Caco-2 (cell line): ENCODE measurements at regions of chr3 and their contacts with region 1.

Region 1: DNA sequence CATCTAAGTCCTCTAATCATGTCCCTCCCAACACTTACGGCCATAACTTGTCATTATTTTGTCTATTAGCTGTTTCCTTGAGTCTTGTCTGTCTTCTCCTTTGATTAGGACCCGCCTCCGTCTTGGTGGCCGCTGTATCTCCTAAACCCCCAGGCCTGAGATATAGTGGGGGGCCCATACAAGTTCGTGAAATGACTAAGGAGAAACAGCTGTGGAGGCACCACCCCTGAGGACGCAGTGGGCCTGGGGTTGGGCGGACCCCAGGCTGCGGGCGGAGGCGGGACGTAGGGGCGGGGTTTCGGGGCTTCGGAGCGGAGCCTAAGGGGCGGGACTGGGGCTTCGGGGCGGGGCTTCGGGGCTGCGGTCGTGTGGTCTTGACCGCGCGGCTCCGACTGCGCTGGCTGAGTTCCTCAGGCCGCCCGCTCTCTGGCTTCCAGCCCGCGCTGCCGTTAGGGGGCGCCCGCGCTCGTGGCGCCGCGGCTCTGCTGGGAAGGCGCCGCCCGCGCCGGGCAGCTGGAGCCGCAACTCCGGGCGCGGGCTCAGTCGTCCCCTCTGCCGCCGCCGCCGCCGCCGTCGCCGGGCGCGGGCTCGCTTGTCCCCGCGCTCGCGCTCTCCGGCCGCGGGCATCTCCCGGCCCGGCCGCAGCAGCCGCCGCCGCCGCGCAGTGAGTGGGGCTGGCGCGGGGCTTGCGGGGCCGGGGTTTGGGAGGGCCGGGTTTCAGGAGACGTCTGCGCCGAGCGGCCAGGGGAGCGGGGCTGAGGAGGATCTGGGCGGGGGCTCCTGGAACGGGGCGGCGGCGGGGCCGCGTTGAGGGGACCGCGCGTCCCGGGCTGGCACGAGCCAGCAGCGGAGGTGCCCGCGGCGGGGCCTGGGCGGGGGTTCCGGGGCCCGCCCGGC is at the start of gene KCTD6:
- DNase-seq: peak; percentile 90 to 96
- H3K4me3 ChIP-seq: peak within 1 kb of the TSS; percentile 51
- H3K4me3 Mint-ChIP-seq: peak within 1 kb of the TSS; percentile 94
- H3K27ac Mint-ChIP-seq: peak within 1 kb of the TSS; percentile 87
- H3K4me1 ChIP-seq: peaks cover 26% of the 10 kb centered on the region
- H3K4me1 Mint-ChIP-seq: peaks cover 23% of the 10 kb centered on the region
- H3K27me3 ChIP-seq: no peaks in the 10 kb centered on the region
- H3K27me3 Mint-ChIP-seq: no peaks in the 10 kb centered on the region
- CTCF ChIP-seq: peak; percentile 70 to 73
- total RNA-seq, gene KCTD6: 9.2 and 9.8 TPM in 2 replicates

Region 2: DNA sequence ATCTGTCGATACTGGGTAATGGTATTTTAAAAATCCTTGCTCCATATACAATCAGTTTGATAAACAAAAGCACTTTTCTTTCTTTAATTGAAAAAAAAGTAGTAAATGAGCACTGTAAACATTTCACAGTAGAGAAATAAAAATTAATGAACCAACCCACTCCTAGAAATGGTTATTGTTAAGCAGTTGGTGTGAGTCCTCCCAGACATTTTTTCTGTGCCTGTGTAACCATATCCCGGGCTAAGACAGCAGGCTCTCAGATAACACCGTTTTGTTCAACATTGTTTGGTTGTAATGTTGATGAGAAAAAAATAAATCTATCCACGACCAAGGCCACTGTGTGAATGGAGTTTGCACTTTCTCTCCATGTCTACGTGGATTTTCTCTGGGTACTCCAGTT is 116.5 kb before region 1 on chr3:
- CTCF ChIA-PET with region 1: no interaction called
- POLR2A ChIA-PET with region 1: no interaction called
- intact Hi-C with region 1: no loop called
- DNase-seq: no peak
- H3K4me3 ChIP-seq: no peak overlapping the region
- H3K4me3 Mint-ChIP-seq: no peak overlapping the region
- H3K27ac Mint-ChIP-seq: no peak overlapping the region
- H3K4me1 ChIP-seq: peaks cover 13% of the 10 kb centered on the region
- H3K4me1 Mint-ChIP-seq: peaks cover 19% of the 10 kb centered on the region
- H3K27me3 ChIP-seq: no peaks in the 10 kb centered on the region
- H3K27me3 Mint-ChIP-seq: no peaks in the 10 kb centered on the region
- CTCF ChIP-seq: no peak

Region 3: DNA sequence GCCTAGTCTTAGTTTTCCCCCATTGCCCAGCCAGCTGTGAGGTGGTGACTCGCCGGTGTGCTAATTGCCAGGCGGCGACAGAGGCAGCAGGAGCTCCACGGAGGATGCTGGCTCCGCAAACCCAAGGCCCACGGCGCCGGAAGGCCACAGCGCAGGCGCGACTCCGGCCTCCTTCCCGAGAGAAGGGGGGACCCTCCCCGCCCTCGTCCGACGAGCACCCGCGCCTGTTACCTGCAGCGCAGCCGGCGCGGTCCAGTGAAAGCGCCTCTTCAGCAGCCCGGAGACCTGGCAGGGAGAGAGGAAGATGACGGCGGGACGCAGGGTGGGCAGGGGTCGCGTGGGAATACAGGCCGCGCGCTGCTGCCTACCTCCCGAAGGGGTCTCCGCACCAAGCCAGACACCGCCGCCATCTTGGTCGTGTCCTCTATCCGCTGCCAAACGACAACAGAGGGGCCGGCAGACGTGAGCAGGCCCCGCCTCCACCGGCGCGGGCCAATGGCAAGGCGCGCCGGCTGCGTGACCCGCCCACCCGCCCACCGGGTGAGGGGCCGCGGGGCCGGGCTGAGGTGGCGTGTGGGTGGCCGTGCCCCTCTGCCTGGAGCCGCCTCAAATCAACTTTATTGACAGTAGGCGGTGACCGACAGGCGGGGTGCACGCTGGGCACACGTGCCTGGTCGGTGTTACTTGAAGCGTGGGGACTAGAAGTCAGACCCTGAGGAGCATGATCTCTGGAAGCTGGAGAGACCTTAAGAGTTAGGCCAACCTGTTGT is 58.2 kb before region 1 on chr3 and contains the start of gene PDHB:
- CTCF ChIA-PET with region 1: no interaction called
- POLR2A ChIA-PET with region 1: no interaction called
- intact Hi-C with region 1: loop called (anchors 2 kb)
- DNase-seq: peak; percentile 87 to 89
- H3K4me3 ChIP-seq: peak within 1 kb of the TSS; percentile 81
- H3K4me3 Mint-ChIP-seq: peak within 1 kb of the TSS; percentile 80
- H3K27ac Mint-ChIP-seq: peak within 1 kb of the TSS; percentile 82
- H3K4me1 ChIP-seq: peaks cover 21% of the 10 kb centered on the region
- H3K4me1 Mint-ChIP-seq: peaks cover 15% of the 10 kb centered on the region
- H3K27me3 ChIP-seq: no peaks in the 10 kb centered on the region
- H3K27me3 Mint-ChIP-seq: no peaks in the 10 kb centered on the region
- CTCF ChIP-seq: no peak
- total RNA-seq, gene PDHB: 81.8 and 89.8 TPM in 2 replicates

Region 4: GRCh38 chr3:58463181-58463941 is 28.4 kb before region 1 on chr3:
- CTCF ChIA-PET with region 1: no interaction called
- POLR2A ChIA-PET with region 1: no interaction called
- intact Hi-C with region 1: loop called (anchors 1 kb)
- DNase-seq: peak; percentile 80 to 83
- H3K4me3 ChIP-seq: no peak overlapping the region
- H3K4me3 Mint-ChIP-seq: no peak overlapping the region
- H3K27ac Mint-ChIP-seq: no peak overlapping the region
- H3K4me1 ChIP-seq: peaks cover 11% of the 10 kb centered on the region
- H3K4me1 Mint-ChIP-seq: no peaks in the 10 kb centered on the region
- H3K27me3 ChIP-seq: no peaks in the 10 kb centered on the region
- H3K27me3 Mint-ChIP-seq: no peaks in the 10 kb centered on the region
- CTCF ChIP-seq: peak; percentile 88 to 90

Region 5: DNA sequence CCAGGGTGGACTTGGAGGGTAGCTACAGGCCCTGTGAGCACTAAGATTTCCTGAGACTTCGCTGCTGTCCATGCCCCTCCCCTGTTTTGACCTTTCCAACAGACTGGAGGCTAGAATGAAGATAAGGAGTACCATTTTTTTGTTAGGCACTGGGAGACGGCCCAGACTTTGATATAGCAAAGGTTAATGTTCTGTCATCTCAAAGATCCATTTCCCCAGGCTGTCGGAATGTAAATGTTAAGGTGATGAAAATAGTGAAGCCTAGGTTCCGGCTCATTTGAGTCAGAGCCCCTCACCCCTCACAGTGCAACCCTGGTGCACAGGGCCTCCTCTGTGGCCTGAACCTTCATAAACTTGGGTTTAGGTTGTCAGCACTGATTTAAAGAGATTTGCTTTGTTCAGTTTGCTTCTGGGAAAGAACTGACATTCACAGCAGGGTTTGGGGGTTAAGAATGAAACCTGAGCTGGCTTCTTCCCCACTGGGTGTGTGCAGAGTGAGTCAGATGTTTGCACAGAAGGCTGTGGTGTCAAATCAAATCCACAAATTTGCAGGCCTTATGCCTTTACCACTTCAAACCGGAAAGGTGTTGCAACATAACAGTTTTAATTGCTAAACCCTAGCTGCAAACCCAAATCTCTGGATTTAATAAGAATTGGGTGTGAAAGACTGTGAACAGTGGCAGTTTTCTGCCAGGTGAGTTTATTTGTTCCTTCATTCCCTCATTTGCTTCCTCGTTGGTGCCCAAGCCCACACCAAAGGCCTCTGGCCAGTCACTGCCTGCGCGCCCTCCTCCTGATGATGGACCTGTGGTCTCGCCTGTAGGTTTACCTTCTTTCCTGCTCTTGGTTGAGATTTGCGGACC is 20.5 kb before region 1 on chr3:
- CTCF ChIA-PET with region 1: no interaction called
- POLR2A ChIA-PET with region 1: no interaction called
- intact Hi-C with region 1: loop called (anchors 2 kb)
- DNase-seq: peak; percentile 78 to 86
- H3K4me3 ChIP-seq: no peak overlapping the region
- H3K4me3 Mint-ChIP-seq: no peak overlapping the region
- H3K27ac Mint-ChIP-seq: peak overlapping the region; percentile 73
- H3K4me1 ChIP-seq: peaks cover 35% of the 10 kb centered on the region
- H3K4me1 Mint-ChIP-seq: peaks cover 14% of the 10 kb centered on the region
- H3K27me3 ChIP-seq: no peaks in the 10 kb centered on the region
- H3K27me3 Mint-ChIP-seq: no peaks in the 10 kb centered on the region
- CTCF ChIP-seq: no peak

Region 6: GRCh38 chr3:58553003-58553402 is 61.2 kb after region 1 on chr3:
- CTCF ChIA-PET with region 1: no interaction called
- POLR2A ChIA-PET with region 1: no interaction called
- intact Hi-C with region 1: no loop called
- DNase-seq: no peak
- H3K4me3 ChIP-seq: no peak overlapping the region
- H3K4me3 Mint-ChIP-seq: no peak overlapping the region
- H3K27ac Mint-ChIP-seq: no peak overlapping the region
- H3K4me1 ChIP-seq: peaks cover 16% of the 10 kb centered on the region; the same call in 1 of the 2 replicates
- H3K4me1 Mint-ChIP-seq: peaks cover 26% of the 10 kb centered on the region
- H3K27me3 ChIP-seq: no peaks in the 10 kb centered on the region
- H3K27me3 Mint-ChIP-seq: no peaks in the 10 kb centered on the region
- CTCF ChIP-seq: no peak